B cell (primary cell): ENCODE measurements at regions of chr12 and their contacts with region 1.

Region 1: DNA sequence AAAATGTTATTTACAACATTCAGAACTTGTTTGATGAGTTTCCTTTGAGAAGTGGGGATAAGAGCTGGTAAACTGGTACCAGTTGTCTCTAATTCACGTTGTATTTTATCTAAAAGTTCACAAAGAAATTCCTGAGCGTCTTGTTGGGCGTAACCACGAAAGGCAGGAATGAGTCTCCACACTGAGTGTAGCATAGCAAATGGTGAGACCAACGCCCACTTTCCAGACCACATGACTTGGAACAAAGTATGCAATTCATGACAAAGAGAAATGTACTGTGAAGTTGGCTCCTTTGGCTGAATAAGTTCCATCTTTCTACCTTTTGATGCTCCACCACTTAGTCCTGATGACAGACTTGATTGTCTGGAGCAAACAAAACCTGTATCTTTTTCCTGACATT is 18.4 kb downstream of the USP44 start:
- DNase-seq: no peak
- ATAC-seq: no peak
- H3K4me3 ChIP-seq: no peak overlapping the region
- H3K4me3 Mint-ChIP-seq: no peak overlapping the region
- H3K27ac ChIP-seq: no peak overlapping the region
- H3K27ac Mint-ChIP-seq: no peak overlapping the region
- H3K4me1 ChIP-seq: no peaks in the 10 kb centered on the region
- H3K4me1 Mint-ChIP-seq: peaks cover 1% of the 10 kb centered on the region
- H3K27me3 ChIP-seq: no peaks in the 10 kb centered on the region
- H3K27me3 Mint-ChIP-seq: no peaks in the 10 kb centered on the region
- CTCF ChIP-seq: no peak

Region 2: GRCh38 chr12:95117178-95117599 is 415.7 kb before region 1 on chr12:
- CTCF ChIA-PET with region 1: interaction called, 213 read pairs
- POLR2A ChIA-PET with region 1: no interaction called
- intact Hi-C with region 1: no loop called
- DNase-seq: peak; percentile 79
- ATAC-seq: peak; percentile 76
- H3K4me3 ChIP-seq: no peak overlapping the region
- H3K4me3 Mint-ChIP-seq: no peak overlapping the region
- H3K27ac ChIP-seq: no peak overlapping the region
- H3K27ac Mint-ChIP-seq: no peak overlapping the region
- H3K4me1 ChIP-seq: no peaks in the 10 kb centered on the region
- H3K4me1 Mint-ChIP-seq: no peaks in the 10 kb centered on the region
- H3K27me3 ChIP-seq: no peaks in the 10 kb centered on the region
- H3K27me3 Mint-ChIP-seq: no peaks in the 10 kb centered on the region
- CTCF ChIP-seq: peak; percentile 81

Region 3: GRCh38 chr12:95124106-95124505 is 408.7 kb before region 1 on chr12:
- CTCF ChIA-PET with region 1: interaction called, 213 read pairs
- POLR2A ChIA-PET with region 1: no interaction called
- intact Hi-C with region 1: no loop called
- DNase-seq: no peak
- ATAC-seq: no peak
- H3K4me3 ChIP-seq: no peak overlapping the region
- H3K4me3 Mint-ChIP-seq: no peak overlapping the region
- H3K27ac ChIP-seq: no peak overlapping the region
- H3K27ac Mint-ChIP-seq: no peak overlapping the region
- H3K4me1 ChIP-seq: no peaks in the 10 kb centered on the region
- H3K4me1 Mint-ChIP-seq: no peaks in the 10 kb centered on the region
- H3K27me3 ChIP-seq: no peaks in the 10 kb centered on the region
- H3K27me3 Mint-ChIP-seq: no peaks in the 10 kb centered on the region
- CTCF ChIP-seq: no peak

Region 4: DNA sequence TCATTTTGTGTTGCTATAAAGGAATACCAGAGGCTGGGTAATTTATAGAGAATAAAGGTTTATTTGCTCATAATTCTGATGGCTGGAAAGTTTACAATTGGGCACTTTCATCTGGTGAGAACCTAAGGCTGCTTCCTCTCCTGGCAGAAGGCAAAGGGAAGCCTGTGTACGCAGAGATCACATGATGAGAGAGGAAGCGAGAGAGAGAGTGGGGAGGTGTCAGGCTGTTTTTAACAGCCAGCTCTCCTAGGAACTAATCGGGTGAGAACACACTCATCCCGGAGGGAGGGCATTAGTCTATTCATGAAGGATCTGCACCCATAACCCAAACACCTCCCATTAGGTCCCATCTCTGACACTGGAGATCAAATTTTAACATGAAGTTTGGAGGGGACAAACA is 104.4 kb before region 1 on chr12:
- CTCF ChIA-PET with region 1: no interaction called
- POLR2A ChIA-PET with region 1: no interaction called
- intact Hi-C with region 1: no loop called
- DNase-seq: peak; percentile 66
- ATAC-seq: peak; percentile 79
- H3K4me3 ChIP-seq: peak overlapping the region in 4 of 5 experiments; percentile 11 to 41 (median 30)
- H3K4me3 Mint-ChIP-seq: peak overlapping the region; percentile 48
- H3K27ac ChIP-seq: peak overlapping the region; percentile 29 to 34
- H3K27ac Mint-ChIP-seq: peak overlapping the region; percentile 44
- H3K4me1 ChIP-seq: peaks cover 7 to 8% of the 10 kb centered on the region in 2 donors
- H3K4me1 Mint-ChIP-seq: peaks cover 11% of the 10 kb centered on the region
- H3K27me3 ChIP-seq: no peaks in the 10 kb centered on the region
- H3K27me3 Mint-ChIP-seq: peaks cover 4% of the 10 kb centered on the region
- CTCF ChIP-seq: no peak

Region 5: GRCh38 chr12:95473884-95474659 is 58.8 kb before region 1 on chr12 and contains the start of gene METAP2:
- CTCF ChIA-PET with region 1: interaction called, 12 read pairs
- POLR2A ChIA-PET with region 1: no interaction called
- intact Hi-C with region 1: no loop called
- DNase-seq: peak; percentile 92
- ATAC-seq: peak; percentile 97
- H3K4me3 ChIP-seq: peak within 1 kb of the TSS; percentile 71 to 98 (median 90)
- H3K4me3 Mint-ChIP-seq: peak within 1 kb of the TSS; percentile 100
- H3K27ac ChIP-seq: peak within 1 kb of the TSS; percentile 73 to 94
- H3K27ac Mint-ChIP-seq: peak within 1 kb of the TSS; percentile 99
- H3K4me1 ChIP-seq: peaks cover 16 to 17% of the 10 kb centered on the region in 2 donors
- H3K4me1 Mint-ChIP-seq: peaks cover 47% of the 10 kb centered on the region
- H3K27me3 ChIP-seq: no peaks in the 10 kb centered on the region
- H3K27me3 Mint-ChIP-seq: peaks cover 6% of the 10 kb centered on the region
- CTCF ChIP-seq: no peak
- total RNA-seq, gene METAP2: 49.9 and 64.5 TPM in 2 replicates

Region 6: GRCh38 chr12:95518944-95519343 is 13.9 kb before region 1 on chr12:
- CTCF ChIA-PET with region 1: interaction called, 10 read pairs
- POLR2A ChIA-PET with region 1: no interaction called
- intact Hi-C with region 1: no loop called
- DNase-seq: no peak
- ATAC-seq: no peak
- H3K4me3 ChIP-seq: no peak overlapping the region
- H3K4me3 Mint-ChIP-seq: no peak overlapping the region
- H3K27ac ChIP-seq: no peak overlapping the region
- H3K27ac Mint-ChIP-seq: no peak overlapping the region
- H3K4me1 ChIP-seq: peaks cover 0 to 2% of the 10 kb centered on the region in 2 donors
- H3K4me1 Mint-ChIP-seq: peaks cover 6% of the 10 kb centered on the region
- H3K27me3 ChIP-seq: no peaks in the 10 kb centered on the region
- H3K27me3 Mint-ChIP-seq: no peaks in the 10 kb centered on the region
- CTCF ChIP-seq: no peak

Region 7: DNA sequence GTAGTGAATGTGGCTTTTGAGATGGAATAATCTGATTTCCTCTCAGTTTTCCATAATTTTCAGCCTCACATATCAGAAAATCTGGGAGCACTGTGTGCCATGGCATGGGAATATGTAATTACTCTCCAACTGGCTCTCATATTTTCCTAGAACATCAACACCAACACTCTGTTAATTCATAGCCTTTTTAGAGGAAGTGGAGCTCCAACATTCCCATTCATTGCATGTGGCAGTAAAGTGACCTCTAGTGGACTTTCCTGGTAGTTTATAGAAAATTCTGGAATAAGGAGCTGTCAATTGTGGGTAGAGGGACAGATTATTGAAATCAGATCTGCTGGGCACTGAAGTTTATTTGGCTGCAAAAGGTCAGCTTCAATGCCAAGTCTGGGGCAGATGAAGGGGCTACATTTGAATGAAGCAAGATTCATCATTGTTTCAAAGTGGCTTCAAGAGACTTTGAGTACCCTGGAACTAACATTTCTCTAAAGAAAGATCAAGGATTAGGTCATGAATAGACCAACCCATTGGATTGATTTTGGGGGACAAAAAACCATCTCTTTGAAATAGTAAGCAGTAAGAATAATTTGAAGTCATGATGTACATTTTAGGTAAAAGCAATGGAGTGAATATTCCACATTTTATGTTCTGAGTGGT is 42.1 kb after region 1 on chr12:
- CTCF ChIA-PET with region 1: interaction called, 32 read pairs
- POLR2A ChIA-PET with region 1: no interaction called
- intact Hi-C with region 1: no loop called
- DNase-seq: peak; percentile 14
- ATAC-seq: no peak
- H3K4me3 ChIP-seq: peak overlapping the region in 1 of 5 experiments; percentile 43
- H3K4me3 Mint-ChIP-seq: peak overlapping the region; percentile 82
- H3K27ac ChIP-seq: peak overlapping the region; percentile 72 to 74
- H3K27ac Mint-ChIP-seq: peak overlapping the region; percentile 92
- H3K4me1 ChIP-seq: peaks cover 41 to 46% of the 10 kb centered on the region in 2 donors
- H3K4me1 Mint-ChIP-seq: peaks cover 43% of the 10 kb centered on the region
- H3K27me3 ChIP-seq: peaks cover 0 to 4% (median 0%) of the 10 kb centered on the region in 4 experiments
- H3K27me3 Mint-ChIP-seq: no peaks in the 10 kb centered on the region
- CTCF ChIP-seq: peak; percentile 27